CD8-positive, alpha-beta T cell (primary cell): ENCODE measurements at regions of chr7 and their contacts with region 1.

Region 1: DNA sequence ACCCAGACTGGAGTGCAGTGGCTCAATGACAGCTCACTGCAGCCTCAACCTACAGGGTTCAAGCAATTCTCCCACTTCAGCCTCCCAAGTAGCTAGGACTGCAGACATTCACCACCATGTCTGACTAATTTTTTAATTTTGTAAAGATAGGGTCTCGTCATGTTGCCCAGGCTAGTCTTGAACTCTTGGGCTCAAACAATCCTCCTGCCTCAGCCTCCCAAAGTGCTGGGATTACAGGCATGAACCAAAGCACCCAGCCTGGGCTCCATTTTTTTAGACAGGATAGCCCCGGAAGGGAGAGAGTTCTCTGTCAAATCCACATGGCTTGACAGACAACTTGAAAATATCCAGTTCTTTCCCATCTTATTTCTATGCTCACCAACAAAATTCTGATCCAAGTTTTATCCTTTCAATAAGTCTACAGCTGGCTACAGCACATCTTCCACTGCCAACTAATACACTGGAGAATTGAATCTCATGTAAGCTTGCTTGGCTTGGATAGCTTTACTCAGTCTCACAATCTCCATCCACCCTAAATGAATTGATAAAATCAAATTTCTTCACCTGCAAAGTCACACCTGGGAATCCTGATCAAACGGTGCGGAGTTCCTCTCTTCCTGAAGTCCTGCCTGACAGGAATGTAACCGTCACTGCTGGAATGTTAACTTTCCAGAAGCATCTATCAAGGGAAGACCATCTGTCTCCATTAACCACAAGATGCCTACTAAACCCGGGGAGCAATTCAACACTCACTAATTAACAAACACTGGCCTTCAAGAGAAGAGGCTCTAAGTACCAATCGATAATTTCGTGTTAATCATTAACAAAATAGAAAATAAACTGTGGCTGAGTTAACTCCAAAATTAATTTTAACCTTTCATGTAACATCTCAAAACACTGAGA is 239.7 kb upstream of the MKLN1 start:
- DNase-seq: no peak
- ATAC-seq: no peak
- H3K4me3 ChIP-seq: no peak overlapping the region
- H3K4me3 Mint-ChIP-seq: no peak overlapping the region
- H3K27ac ChIP-seq: no peak overlapping the region
- H3K27ac Mint-ChIP-seq: peak overlapping the region; percentile 32
- H3K4me1 ChIP-seq: peaks cover 53% of the 10 kb centered on the region
- H3K4me1 Mint-ChIP-seq: peaks cover 85% of the 10 kb centered on the region
- H3K27me3 ChIP-seq: no peaks in the 10 kb centered on the region
- H3K27me3 Mint-ChIP-seq: no peaks in the 10 kb centered on the region
- CTCF ChIP-seq: no peak

Region 2: DNA sequence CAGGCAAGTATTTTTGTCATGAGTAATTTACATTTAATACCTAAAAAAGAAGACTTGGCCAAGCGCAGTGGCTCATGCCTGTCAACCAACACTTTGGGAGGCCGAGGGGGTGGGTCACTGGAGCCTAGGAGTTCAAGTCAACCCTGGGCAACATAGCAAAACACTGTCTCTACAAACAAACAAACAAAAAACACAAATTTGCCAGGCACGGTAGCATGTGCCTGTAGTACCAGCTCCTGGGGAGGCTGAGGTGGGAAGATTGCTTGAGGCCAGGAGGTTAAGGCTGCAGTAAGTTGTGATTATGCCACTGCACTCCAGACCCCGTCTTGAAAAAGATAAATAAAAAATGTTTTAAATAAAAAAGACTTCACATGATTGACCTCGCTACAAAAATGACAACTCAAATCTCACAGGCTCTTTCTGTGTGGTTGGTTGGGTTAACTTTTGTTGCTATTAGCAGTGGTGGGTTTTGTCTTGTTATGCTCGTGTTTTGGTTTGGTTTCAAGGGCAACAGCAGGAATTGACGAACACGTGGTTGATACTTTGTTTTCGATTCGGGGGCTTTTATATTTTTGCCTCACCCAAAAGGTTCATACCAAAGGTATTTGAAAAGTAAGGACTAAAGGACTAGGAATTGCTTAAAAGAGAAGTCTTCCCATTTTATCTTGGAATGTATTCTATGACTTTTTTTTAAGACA is 12.5 kb after region 1 on chr7:
- CTCF ChIA-PET with region 1: no interaction called
- POLR2A ChIA-PET with region 1: no interaction called
- intact Hi-C with region 1: loop called in 1 of 2 experiments (anchors 2 kb)
- DNase-seq: peak in 5 of 9 experiments; percentile 22 to 89 (median 40)
- ATAC-seq: peak; percentile 41
- H3K4me3 ChIP-seq: peak overlapping the region in 1 of 2 experiments; percentile 0
- H3K4me3 Mint-ChIP-seq: peak overlapping the region; percentile 71
- H3K27ac ChIP-seq: peak overlapping the region; percentile 60 to 80
- H3K27ac Mint-ChIP-seq: peak overlapping the region; percentile 85
- H3K4me1 ChIP-seq: peaks cover 92% of the 10 kb centered on the region
- H3K4me1 Mint-ChIP-seq: peaks cover 91% of the 10 kb centered on the region
- H3K27me3 ChIP-seq: no peaks in the 10 kb centered on the region
- H3K27me3 Mint-ChIP-seq: no peaks in the 10 kb centered on the region
- CTCF ChIP-seq: no peak

Region 3: GRCh38 chr7:131164025-131164899 is 76.3 kb after region 1 on chr7:
- CTCF ChIA-PET with region 1: no interaction called
- POLR2A ChIA-PET with region 1: no interaction called
- intact Hi-C with region 1: no loop called
- DNase-seq: no peak
- ATAC-seq: no peak
- H3K4me3 ChIP-seq: no peak overlapping the region
- H3K4me3 Mint-ChIP-seq: no peak overlapping the region
- H3K27ac ChIP-seq: no peak overlapping the region
- H3K27ac Mint-ChIP-seq: no peak overlapping the region
- H3K4me1 ChIP-seq: no peaks in the 10 kb centered on the region
- H3K4me1 Mint-ChIP-seq: no peaks in the 10 kb centered on the region
- H3K27me3 ChIP-seq: peaks cover 0 to 2% of the 10 kb centered on the region in 2 experiments
- H3K27me3 Mint-ChIP-seq: no peaks in the 10 kb centered on the region
- CTCF ChIP-seq: no peak